CD8-positive, alpha-beta memory T cell (primary cell): ENCODE measurements at regions of chr1 and their contacts with region 1.

Region 1: GRCh38 chr1:99481391-99481996 is 164.4 kb upstream of the PALMD start:
- DNase-seq: peak in 3 of 5 donors; percentile 12 to 47 (median 40)
- H3K4me3 ChIP-seq: no peak overlapping the region
- H3K4me3 Mint-ChIP-seq: no peak overlapping the region
- H3K27ac ChIP-seq: no peak overlapping the region
- H3K27ac Mint-ChIP-seq: no peak overlapping the region
- H3K4me1 ChIP-seq: no peaks in the 10 kb centered on the region
- H3K4me1 Mint-ChIP-seq: no peaks in the 10 kb centered on the region
- H3K27me3 ChIP-seq: no peaks in the 10 kb centered on the region
- H3K27me3 Mint-ChIP-seq: peaks cover 1 to 22% of the 10 kb centered on the region in 2 donors

Region 2: DNA sequence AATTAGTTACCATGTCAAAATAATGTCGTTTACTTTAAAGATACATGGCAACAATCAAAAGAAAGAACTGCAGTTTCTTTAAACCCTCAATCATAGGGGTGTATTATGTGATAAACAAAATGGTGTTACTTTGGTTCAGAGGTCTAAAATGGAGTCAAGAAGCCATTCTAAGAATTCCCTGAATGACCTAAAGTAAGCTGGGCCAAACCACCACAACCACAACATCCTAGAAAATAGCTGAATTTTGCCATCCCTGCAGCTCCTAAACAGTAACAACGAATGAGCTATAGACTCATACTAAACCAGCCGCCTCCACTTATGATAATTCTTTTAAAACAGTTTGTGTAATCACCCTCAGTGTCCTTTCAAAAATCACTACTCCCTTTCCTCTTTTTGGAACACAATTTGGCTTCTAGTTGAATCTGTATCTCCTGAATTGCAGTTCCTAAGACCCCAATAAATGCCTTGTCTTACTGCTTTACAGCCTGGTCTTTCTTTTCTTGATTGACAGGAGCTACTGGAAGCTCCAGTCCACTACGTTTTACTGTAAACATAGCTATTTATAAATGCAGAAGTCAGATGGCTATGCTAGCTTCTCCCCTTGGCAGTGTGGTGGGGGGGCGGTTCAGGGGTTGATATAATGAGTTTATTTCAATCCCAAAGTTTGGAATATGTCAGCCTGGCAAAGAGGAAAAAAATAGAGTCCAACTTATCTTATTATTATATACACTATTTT is 132.9 kb before region 1 on chr1:
- CTCF ChIA-PET with region 1: no interaction called
- POLR2A ChIA-PET with region 1: no interaction called
- DNase-seq: no peak
- H3K4me3 ChIP-seq: no peak overlapping the region
- H3K4me3 Mint-ChIP-seq: no peak overlapping the region
- H3K27ac ChIP-seq: no peak overlapping the region
- H3K27ac Mint-ChIP-seq: no peak overlapping the region
- H3K4me1 ChIP-seq: no peaks in the 10 kb centered on the region
- H3K4me1 Mint-ChIP-seq: no peaks in the 10 kb centered on the region
- H3K27me3 ChIP-seq: no peaks in the 10 kb centered on the region
- H3K27me3 Mint-ChIP-seq: peaks cover 0 to 5% of the 10 kb centered on the region in 2 donors

Region 3: GRCh38 chr1:99469550-99469971 is 11.9 kb before region 1 on chr1:
- CTCF ChIA-PET with region 1: interaction called, 19 read pairs
- POLR2A ChIA-PET with region 1: no interaction called
- DNase-seq: no peak
- H3K4me3 ChIP-seq: no peak overlapping the region
- H3K4me3 Mint-ChIP-seq: no peak overlapping the region
- H3K27ac ChIP-seq: no peak overlapping the region
- H3K27ac Mint-ChIP-seq: no peak overlapping the region
- H3K4me1 ChIP-seq: no peaks in the 10 kb centered on the region
- H3K4me1 Mint-ChIP-seq: no peaks in the 10 kb centered on the region
- H3K27me3 ChIP-seq: no peaks in the 10 kb centered on the region
- H3K27me3 Mint-ChIP-seq: peaks cover 2 to 4% of the 10 kb centered on the region in 2 donors

Region 4: DNA sequence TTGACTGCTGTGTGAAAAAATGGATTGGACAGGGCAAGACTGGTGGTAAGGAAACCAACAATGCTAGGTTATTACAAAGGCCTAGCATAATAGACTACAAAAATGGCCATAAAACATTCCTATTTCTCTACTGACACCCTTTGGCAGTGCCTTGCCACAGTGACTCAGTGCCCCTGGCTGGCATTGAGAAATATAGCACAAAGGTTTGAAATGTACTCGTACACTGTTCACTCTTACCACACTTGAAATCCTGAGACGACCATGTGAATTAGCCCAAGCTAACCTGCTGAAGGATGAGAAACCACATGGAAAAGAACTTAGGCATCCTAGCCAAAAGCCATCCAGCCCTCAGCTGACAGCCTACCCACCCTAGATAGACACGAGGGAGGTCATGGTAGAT is 14.6 kb after region 1 on chr1:
- CTCF ChIA-PET with region 1: no interaction called
- POLR2A ChIA-PET with region 1: no interaction called
- DNase-seq: no peak
- H3K4me3 ChIP-seq: no peak overlapping the region
- H3K4me3 Mint-ChIP-seq: peak overlapping the region in 1 of 7 donors; percentile 4
- H3K27ac ChIP-seq: no peak overlapping the region
- H3K27ac Mint-ChIP-seq: no peak overlapping the region
- H3K4me1 ChIP-seq: no peaks in the 10 kb centered on the region
- H3K4me1 Mint-ChIP-seq: no peaks in the 10 kb centered on the region
- H3K27me3 ChIP-seq: no peaks in the 10 kb centered on the region
- H3K27me3 Mint-ChIP-seq: peaks cover 0 to 2% of the 10 kb centered on the region in 2 donors

Region 5: GRCh38 chr1:99645699-99646531 is 164.4 kb after region 1 on chr1 and contains the start of gene PALMD:
- CTCF ChIA-PET with region 1: no interaction called
- POLR2A ChIA-PET with region 1: no interaction called
- DNase-seq: no peak
- H3K4me3 ChIP-seq: no peak within 1 kb of the TSS
- H3K4me3 Mint-ChIP-seq: no peak within 1 kb of the TSS
- H3K27ac ChIP-seq: peak within 1 kb of the TSS; percentile 55
- H3K27ac Mint-ChIP-seq: no peak within 1 kb of the TSS
- H3K4me1 ChIP-seq: no peaks in the 10 kb centered on the region
- H3K4me1 Mint-ChIP-seq: peaks cover 0 to 7% (median 0%) of the 10 kb centered on the region in 3 donors
- H3K27me3 ChIP-seq: no peaks in the 10 kb centered on the region
- H3K27me3 Mint-ChIP-seq: peaks cover 9 to 38% of the 10 kb centered on the region in 2 donors
- total RNA-seq, gene PALMD: not detected